AG04450 (cell line): ENCODE measurements at regions of chrX and their contacts with region 1.

Region 1: DNA sequence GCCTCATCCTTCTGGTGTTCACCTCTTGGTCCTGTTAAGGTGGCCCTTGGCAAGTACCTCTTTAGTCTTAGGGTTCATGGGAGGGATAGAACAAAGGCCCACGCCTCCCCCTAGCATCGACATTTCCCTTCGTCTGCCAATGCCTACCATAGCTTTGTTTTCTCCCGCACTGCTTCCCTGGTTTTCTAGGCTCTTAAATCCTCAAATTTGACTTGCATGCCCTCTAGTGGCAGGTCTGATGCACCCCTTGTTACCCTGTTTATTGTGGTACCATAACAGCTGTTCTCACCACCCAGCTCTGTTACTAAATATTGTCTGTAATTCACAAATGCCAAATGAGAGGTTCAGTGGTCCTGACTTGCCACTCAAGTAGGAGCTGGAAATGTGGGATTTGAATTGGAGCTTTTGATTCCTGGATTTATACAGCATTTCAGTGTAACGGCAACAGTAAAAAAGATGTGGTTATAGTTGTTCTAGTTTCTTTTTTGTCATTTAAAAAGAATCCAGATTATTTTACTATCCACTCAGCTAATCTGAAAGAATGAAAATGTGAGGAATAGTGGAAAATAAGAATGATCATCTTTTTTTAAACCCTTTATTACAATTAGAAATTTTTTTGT is 100.1 kb downstream of the REPS2 start:
- DNase-seq: peak; percentile 39
- H3K4me3 ChIP-seq: no peak overlapping the region
- H3K27ac ChIP-seq: no peak overlapping the region
- H3K27me3 ChIP-seq: no peaks in the 10 kb centered on the region
- CTCF ChIP-seq: peak; percentile 78

Region 2: DNA sequence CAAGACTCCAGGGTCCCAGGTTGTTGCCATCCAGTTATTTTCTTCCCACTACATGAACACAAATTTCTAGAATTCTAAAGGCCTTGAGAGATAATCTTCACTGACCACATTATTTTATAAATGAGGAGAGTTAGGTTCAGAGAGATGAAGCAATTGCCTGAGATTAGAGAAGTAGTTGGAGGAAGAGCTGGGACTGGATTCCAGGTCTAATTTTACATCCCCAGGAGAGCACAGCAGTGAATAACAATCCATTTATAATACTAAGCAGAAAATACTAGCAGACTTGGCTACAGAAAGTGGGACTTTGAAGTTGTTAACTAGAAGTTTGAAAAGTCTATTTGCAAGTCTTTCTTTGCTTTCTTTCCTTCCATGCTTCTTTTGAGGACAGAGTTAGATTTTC is 627.9 kb before region 1 on chrX:
- CTCF ChIA-PET with region 1: interaction called, 11 read pairs
- POLR2A ChIA-PET with region 1: no interaction called
- DNase-seq: no peak
- H3K4me3 ChIP-seq: no peak overlapping the region
- H3K27ac ChIP-seq: no peak overlapping the region
- H3K27me3 ChIP-seq: no peaks in the 10 kb centered on the region
- CTCF ChIP-seq: no peak

Region 3: DNA sequence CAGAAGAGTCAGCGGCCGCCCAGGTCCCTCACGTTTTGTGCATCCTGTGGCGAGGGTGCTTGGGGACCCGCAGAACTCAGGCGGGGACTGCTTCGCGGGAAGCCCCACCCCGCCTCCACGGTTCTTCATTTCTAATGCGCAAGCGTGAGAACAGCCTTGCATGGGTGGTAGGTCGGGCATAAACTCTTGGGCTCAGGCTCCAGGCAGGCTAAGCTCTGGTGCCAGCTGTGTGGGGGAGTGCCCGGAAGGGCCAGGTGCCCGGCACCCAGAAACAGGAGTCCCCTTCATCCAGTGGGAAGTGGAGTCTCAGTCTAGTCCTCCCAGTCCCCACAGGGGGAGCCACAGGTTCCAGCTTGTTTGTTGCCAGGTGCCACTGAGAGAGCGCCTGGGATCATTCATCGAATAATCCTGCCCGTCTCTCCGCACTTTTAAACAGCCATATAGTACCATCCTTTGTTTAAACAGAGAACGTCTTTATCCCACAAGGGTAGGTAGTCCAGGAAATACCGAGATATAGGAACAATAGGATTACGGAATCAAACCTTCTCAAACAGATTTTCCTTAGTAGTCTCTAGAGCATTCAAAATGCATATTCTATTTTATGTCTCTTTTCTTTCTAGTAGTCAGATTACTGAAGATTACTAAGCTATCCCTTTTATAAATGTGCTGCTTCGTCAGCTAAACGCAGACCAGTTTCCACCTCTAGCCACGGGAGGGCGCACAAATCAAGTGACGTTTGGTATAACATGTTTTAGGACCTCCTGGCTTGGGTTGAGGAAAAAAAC is 163.7 kb before region 1 on chrX:
- CTCF ChIA-PET with region 1: interaction called, 116 read pairs
- POLR2A ChIA-PET with region 1: no interaction called
- DNase-seq: no peak
- H3K4me3 ChIP-seq: peak overlapping the region; percentile 61
- H3K27ac ChIP-seq: no peak overlapping the region
- H3K27me3 ChIP-seq: no peaks in the 10 kb centered on the region
- CTCF ChIP-seq: peak; percentile 64

Region 4: GRCh38 chrX:17021851-17022604 is 24.6 kb before region 1 on chrX:
- CTCF ChIA-PET with region 1: interaction called, 14 read pairs
- POLR2A ChIA-PET with region 1: no interaction called
- DNase-seq: peak; percentile 24
- H3K4me3 ChIP-seq: no peak overlapping the region
- H3K27ac ChIP-seq: no peak overlapping the region
- H3K27me3 ChIP-seq: no peaks in the 10 kb centered on the region
- CTCF ChIP-seq: no peak

Region 5: DNA sequence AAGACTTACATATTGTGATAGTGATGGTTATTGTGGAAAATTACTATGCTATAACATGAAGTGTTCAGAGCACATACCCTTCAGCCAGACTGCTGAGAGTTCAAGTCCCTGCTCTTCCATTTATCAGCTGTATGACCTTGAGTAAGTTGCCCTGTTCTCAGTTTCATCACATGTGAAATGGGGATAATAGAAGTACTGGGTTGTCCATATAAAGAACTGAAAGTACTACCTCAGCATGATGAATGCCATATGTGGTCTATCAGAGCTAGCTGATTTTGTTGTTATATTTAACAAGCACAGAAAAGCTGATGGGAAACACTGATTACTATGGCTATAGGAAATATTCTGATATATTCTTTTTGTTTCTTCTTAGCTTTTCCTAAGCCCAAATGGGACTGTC is 15.5 kb after region 1 on chrX:
- CTCF ChIA-PET with region 1: interaction called, 10 read pairs
- POLR2A ChIA-PET with region 1: no interaction called
- DNase-seq: no peak
- H3K4me3 ChIP-seq: no peak overlapping the region
- H3K27ac ChIP-seq: no peak overlapping the region
- H3K27me3 ChIP-seq: no peaks in the 10 kb centered on the region
- CTCF ChIP-seq: no peak